ENCODE measurements at regions of chr4 and their contacts with region 1.

Region 1: DNA sequence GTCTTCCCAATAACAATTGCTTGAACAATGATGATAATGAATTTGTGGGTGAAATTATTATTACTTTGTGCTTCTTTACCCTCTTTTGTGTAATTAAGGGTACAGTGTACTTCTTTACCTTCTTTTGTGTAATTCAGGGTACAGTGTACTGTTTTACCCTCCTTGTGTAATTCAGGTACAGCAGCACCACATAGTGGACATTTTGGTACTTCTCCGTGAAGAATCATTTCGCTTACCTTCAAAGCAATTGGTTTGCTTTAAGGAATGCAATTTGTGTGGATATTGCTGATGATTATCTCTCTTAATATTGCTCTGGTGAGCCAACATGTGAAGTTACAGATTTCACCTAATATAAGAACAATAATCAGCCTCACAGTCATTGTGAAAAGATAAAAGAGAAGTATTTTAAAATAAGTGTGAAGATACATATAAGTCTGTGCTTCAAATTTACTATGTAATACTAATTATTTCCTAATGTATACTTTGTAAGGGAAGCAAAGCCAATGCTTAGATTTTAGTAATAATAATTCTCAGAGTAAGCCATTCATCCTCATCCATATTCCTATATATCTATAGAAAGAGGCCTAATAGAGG is 27.2 kb upstream of the SEC24B start:
- H3K4me3 Mint-ChIP-seq: no peak overlapping the region
- H3K27ac Mint-ChIP-seq: no peak overlapping the region
- H3K4me1 Mint-ChIP-seq: no peaks in the 10 kb centered on the region
- H3K27me3 Mint-ChIP-seq: peaks cover 9% of the 10 kb centered on the region

Region 2: GRCh38 chr4:108683479-108683878 is 723.0 kb before region 1 on chr4:
- intact Hi-C with region 1: loop called (anchors 10 kb)
- H3K4me3 Mint-ChIP-seq: no peak overlapping the region
- H3K27ac Mint-ChIP-seq: no peak overlapping the region
- H3K4me1 Mint-ChIP-seq: peaks cover 5% of the 10 kb centered on the region
- H3K27me3 Mint-ChIP-seq: no peaks in the 10 kb centered on the region

Measured in dendritic cell treated with granulocyte-macrophage colony-stimulating factor and Interleukin-4, amounts not matched to agents 40 ng/mL and 50 ng/mL, for 4 days (primary cell).